ENCODE measurements at regions of chrX and their contacts with region 1.

Region 1: GRCh38 chrX:10111364-10112148 is 45.2 kb upstream of the CLCN4 start:
- DNase-seq: peak in 1 of 5 donors; percentile 66
- ATAC-seq: peak; percentile 55 to 70 (median 61)
- H3K4me3 ChIP-seq: no peak overlapping the region
- H3K27ac ChIP-seq: peak overlapping the region in 8 of 12 donors; percentile 16 to 57 (median 40)
- H3K4me1 ChIP-seq: peaks cover 0 to 65% (median 30%) of the 10 kb centered on the region in 12 donors
- H3K27me3 ChIP-seq: no peaks in the 10 kb centered on the region
- CTCF ChIP-seq: no peak
- POLR2A ChIP-seq: no peak

Region 2: GRCh38 chrX:10052906-10053625 is 58.5 kb before region 1 on chrX:
- intact Hi-C with region 1: loop called in 2 of 10 experiments (anchors 2 to 10 kb)
- DNase-seq: peak in 4 of 5 donors; percentile 30 to 56 (median 40)
- ATAC-seq: peak; percentile 71 to 87 (median 82)
- H3K4me3 ChIP-seq: no peak overlapping the region
- H3K27ac ChIP-seq: peak overlapping the region; percentile 32 to 75 (median 58)
- H3K4me1 ChIP-seq: peaks cover 0 to 63% (median 35%) of the 10 kb centered on the region in 12 donors
- H3K27me3 ChIP-seq: peaks cover 0 to 4% (median 0%) of the 10 kb centered on the region in 9 donors
- CTCF ChIP-seq: peak in 1 of 12 donors; percentile 6
- POLR2A ChIP-seq: no peak

Measured in heart left ventricle (tissue), 16 donors.